Colonic mucosa (tissue), 4 donors: ENCODE measurements at regions of chr5 and their contacts with region 1.

Region 1: GRCh38 chr5:149448831-149449714 is 70.0 kb upstream of the IL17B start:
- DNase-seq: peak; percentile 71
- H3K4me3 ChIP-seq: no peak overlapping the region
- H3K27ac ChIP-seq: peak overlapping the region; percentile 90
- H3K4me1 ChIP-seq: peaks cover 25% of the 10 kb centered on the region
- H3K27me3 ChIP-seq: no peaks in the 10 kb centered on the region
- CTCF ChIP-seq: peak; percentile 50

Region 2: DNA sequence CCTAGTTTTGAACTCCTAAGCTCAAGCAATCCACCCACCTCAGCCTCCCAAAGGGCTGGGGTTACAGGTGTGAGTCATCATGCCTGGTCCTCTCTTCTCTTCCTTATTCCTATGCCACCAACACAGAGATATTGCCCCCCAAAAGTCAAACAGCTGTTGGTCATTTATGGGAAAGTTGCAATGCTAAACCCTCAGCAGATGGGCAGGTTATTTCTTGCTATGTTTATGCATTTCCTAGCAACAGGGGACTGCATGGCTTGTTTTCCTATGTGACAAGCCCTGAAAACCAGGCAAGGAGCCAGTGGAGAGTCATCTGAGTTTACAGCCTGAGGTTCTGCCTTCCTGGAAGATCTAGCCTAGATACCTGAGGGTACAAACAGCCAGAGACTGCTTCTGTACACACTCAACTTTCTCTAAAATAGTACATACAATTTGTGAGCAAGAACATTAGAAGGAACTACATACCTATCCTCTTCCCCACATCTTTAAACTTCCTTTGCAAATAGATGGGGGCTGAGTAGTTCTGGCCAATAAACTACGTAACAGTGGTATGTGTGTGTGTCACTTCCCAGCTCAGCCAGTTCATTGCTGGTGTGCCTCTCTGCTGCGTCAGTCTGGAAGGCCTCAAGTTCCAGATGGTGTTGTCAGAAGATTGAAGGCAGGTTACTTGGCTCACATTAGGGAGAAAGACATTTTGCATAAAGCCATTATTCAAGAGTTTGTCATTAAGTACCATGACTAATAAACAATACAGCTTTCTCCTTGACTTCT is 36.8 kb after region 1 on chr5:
- intact Hi-C with region 1: loop called (anchors 5 kb)
- DNase-seq: peak; percentile 91
- H3K4me3 ChIP-seq: no peak overlapping the region
- H3K27ac ChIP-seq: peak overlapping the region; percentile 79
- H3K4me1 ChIP-seq: peaks cover 14% of the 10 kb centered on the region
- H3K27me3 ChIP-seq: no peaks in the 10 kb centered on the region
- CTCF ChIP-seq: no peak